AG04449 (cell line): ENCODE measurements at regions of chr4 and their contacts with region 1.

Region 1: GRCh38 chr4:53804719-53805118 is 213.4 kb upstream of the LNX1 start:
- DNase-seq: no peak
- H3K4me3 ChIP-seq: no peak overlapping the region
- CTCF ChIP-seq: peak; percentile 6

Region 2: DNA sequence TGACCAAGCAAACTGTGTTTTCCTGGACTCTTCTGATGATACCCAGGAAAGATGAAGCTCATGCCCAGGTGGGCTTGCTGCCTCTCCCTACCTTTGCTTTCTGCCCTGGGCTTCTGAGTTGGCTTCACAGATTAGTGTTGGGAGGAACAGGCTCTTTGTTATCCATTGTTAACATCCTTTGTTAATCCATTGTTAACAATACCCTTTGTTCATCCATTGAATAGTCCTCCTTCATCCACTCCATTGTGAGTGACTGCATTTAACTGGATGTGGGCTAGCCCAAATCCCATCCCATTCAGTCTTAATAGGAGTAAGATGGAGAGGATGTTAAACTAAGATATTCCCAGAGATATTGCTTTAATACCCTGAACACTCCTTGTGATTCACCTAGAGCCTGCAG is 14.4 kb before region 1 on chr4:
- CTCF ChIA-PET with region 1: interaction called, 12 read pairs
- POLR2A ChIA-PET with region 1: no interaction called
- DNase-seq: no peak
- H3K4me3 ChIP-seq: no peak overlapping the region
- CTCF ChIP-seq: no peak

Region 3: GRCh38 chr4:53840643-53841042 is 35.9 kb after region 1 on chr4:
- CTCF ChIA-PET with region 1: no interaction called
- POLR2A ChIA-PET with region 1: no interaction called
- DNase-seq: no peak
- H3K4me3 ChIP-seq: no peak overlapping the region
- CTCF ChIP-seq: no peak